Natural killer cell (primary cell): ENCODE measurements at regions of chr4 and their contacts with region 1.

Region 1: DNA sequence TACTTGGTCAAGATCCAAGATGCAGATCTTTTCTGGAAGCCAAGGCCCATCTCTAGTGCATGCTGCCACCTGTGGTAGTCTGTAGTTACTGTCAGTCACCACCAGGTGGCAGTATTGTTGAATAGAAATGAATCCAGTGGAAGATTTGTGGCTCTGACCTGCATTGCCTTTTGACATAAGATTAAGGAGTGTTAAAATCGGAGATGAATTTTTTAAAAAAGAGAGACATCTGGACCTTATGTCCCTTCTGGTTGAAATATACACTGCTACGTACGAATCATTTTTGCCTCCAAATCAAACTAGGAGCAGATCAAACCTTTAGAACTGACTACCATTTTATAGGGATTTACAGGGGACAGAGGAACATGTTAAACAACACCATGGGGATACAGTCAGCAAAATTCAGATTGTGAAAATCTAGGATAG is 46.9 kb upstream of the RHOH start:
- DNase-seq: peak; percentile 51 to 90
- ATAC-seq: peak; percentile 86 to 98 (median 92)
- H3K4me3 ChIP-seq: no peak overlapping the region
- H3K4me3 Mint-ChIP-seq: no peak overlapping the region
- H3K27ac ChIP-seq: no peak overlapping the region
- H3K27ac Mint-ChIP-seq: no peak overlapping the region
- H3K4me1 ChIP-seq: peaks cover 3% of the 10 kb centered on the region
- H3K4me1 Mint-ChIP-seq: peaks cover 0 to 7% of the 10 kb centered on the region in 2 donors
- H3K27me3 ChIP-seq: no peaks in the 10 kb centered on the region
- H3K27me3 Mint-ChIP-seq: no peaks in the 10 kb centered on the region
- CTCF ChIP-seq: peak; percentile 92

Region 2: GRCh38 chr4:40056716-40057585 is 93.0 kb before region 1 on chr4 and contains the start of gene N4BP2:
- intact Hi-C with region 1: no loop called
- DNase-seq: peak; percentile 63 to 89
- ATAC-seq: peak; percentile 65 to 81 (median 76)
- H3K4me3 ChIP-seq: peak within 1 kb of the TSS; percentile 65
- H3K4me3 Mint-ChIP-seq: peak within 1 kb of the TSS; percentile 95
- H3K27ac ChIP-seq: peak within 1 kb of the TSS; percentile 91
- H3K27ac Mint-ChIP-seq: peak within 1 kb of the TSS; percentile 91 to 95
- H3K4me1 ChIP-seq: peaks cover 18% of the 10 kb centered on the region
- H3K4me1 Mint-ChIP-seq: peaks cover 26 to 39% of the 10 kb centered on the region in 2 donors
- H3K27me3 ChIP-seq: no peaks in the 10 kb centered on the region
- H3K27me3 Mint-ChIP-seq: no peaks in the 10 kb centered on the region
- CTCF ChIP-seq: peak; percentile 74
- total RNA-seq, gene N4BP2: 16.4 to 22.4 (median 17.5) TPM

Region 3: DNA sequence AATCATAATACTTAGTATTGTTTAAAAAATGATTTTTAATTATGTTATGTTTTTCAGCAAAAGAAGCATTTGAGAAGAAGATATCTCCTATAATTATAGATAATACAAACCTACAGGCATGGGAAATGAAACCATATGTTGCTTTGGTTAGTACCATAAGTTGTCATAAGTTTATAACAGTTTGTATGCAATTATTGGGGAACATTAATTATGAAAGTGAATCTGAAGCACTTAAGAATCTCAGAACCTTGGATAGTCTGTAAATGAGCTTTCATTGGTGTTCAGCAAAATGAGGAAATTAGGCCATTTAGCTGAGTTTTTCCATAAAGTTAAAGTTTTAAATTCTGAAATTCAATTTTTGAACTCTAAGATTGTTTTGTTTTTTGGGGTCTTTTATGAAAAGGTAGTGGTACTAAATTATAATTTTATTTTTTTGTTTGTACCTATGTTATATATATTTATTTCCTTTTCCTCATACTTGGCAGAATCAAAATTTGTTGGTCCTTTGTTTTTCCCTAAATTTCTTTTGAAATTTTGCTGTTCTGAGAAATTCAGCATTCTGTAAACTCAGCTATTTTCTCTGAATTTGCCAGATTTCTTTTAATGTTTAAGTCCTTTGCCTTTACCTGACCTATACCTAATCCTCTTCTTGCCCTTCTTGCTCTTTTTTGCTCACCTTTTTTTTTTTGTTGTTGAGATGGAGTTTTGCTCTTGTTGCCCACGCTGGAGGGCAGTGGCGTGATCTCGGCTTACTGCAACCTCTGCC is 37.8 kb before region 1 on chr4:
- intact Hi-C with region 1: no loop called
- DNase-seq: no peak
- ATAC-seq: no peak
- H3K4me3 ChIP-seq: no peak overlapping the region
- H3K4me3 Mint-ChIP-seq: no peak overlapping the region
- H3K27ac ChIP-seq: no peak overlapping the region
- H3K27ac Mint-ChIP-seq: no peak overlapping the region
- H3K4me1 ChIP-seq: no peaks in the 10 kb centered on the region
- H3K4me1 Mint-ChIP-seq: peaks cover 0 to 4% of the 10 kb centered on the region in 2 donors
- H3K27me3 ChIP-seq: no peaks in the 10 kb centered on the region
- H3K27me3 Mint-ChIP-seq: no peaks in the 10 kb centered on the region
- CTCF ChIP-seq: no peak

Region 4: DNA sequence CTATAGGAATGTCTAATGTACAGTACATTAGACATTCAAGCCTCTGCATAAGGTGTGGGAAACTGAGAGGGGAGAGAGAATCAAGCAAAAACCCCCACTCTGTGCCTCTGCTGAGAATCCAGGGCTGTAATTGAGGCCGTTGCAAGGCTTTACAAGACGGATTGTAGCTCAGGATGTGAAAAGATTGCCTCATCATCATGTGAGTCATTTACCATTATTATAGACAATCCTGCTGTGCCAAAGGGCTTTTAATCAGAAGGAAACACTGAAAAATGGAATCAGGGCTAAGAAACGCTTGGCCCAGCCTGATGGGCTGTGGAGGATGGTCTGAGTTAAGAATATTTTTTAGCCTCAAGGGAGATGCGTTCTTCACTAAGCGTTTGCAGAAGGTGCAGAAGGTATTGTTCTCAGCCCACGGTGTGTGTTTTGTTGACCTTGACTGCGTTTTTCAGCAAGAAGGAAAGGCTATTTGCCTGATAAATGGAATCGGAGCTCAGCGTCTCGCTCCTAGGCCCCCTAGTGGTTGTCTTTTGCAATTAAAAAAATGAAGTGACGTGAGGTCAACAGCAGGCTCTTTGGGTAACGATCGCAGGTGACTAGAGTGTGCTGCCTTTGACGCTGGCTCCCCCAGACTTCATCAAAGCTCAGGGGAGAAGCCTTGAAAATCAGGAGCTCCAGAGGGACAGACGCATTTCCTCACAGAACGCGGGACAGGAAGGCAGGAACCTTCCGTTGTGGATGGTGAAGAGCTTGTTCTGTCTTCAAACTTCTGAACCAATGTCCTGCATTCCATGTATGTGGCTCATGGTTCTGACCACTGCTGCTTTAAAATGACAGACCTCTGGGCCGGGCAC is 167.0 kb after region 1 on chr4:
- intact Hi-C with region 1: loop called (anchors 2 kb)
- DNase-seq: peak; percentile 32 to 89
- ATAC-seq: peak; percentile 86 to 89 (median 87)
- H3K4me3 ChIP-seq: peak overlapping the region; percentile 9
- H3K4me3 Mint-ChIP-seq: peak overlapping the region; percentile 71
- H3K27ac ChIP-seq: no peak overlapping the region
- H3K27ac Mint-ChIP-seq: peak overlapping the region in 1 of 2 donors; percentile 35
- H3K4me1 ChIP-seq: peaks cover 9% of the 10 kb centered on the region
- H3K4me1 Mint-ChIP-seq: peaks cover 12 to 13% of the 10 kb centered on the region in 2 donors
- H3K27me3 ChIP-seq: no peaks in the 10 kb centered on the region
- H3K27me3 Mint-ChIP-seq: no peaks in the 10 kb centered on the region
- CTCF ChIP-seq: peak; percentile 87

Region 5: DNA sequence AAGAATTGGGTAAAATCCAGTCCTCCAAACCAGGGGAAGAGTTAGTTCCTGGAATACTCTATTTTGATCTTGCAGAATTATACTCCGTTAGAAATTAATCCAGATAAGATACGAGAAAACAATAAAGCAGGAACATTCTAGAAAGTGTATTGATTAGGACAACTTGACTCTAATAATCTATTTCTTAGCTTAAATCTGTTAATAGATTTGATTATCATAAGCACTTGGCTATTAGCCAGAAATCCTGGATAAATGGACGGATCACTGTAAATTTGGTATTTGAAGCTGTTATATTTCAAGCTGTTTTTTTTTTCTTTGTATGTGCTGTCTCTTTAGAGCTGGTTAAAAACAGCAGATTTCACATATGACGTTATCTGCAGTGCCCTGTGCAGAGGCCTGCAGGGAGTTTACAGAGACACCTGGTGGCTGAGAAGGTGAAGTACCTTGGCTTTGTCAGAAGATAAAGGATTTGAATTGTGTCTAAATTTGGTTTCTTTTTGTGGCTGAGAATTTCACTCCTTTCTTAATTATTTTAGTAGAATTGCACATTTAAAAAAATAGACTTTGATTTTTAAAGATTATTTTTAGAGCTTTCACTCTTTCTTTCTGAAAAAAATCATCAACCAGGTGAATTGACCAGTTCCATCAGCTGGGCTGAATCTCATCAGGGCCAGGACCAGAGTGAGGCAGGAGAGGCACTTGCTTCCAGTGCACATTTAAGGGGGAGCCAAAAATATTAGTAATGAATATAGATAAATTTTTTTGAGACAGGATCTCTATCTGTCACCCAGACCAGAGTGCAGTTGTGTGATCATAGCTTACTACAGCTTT is 175.4 kb after region 1 on chr4:
- intact Hi-C with region 1: loop called (anchors 1 kb)
- DNase-seq: peak in 1 of 2 donors; percentile 89
- ATAC-seq: peak; percentile 93 to 100 (median 99)
- H3K4me3 ChIP-seq: no peak overlapping the region
- H3K4me3 Mint-ChIP-seq: no peak overlapping the region
- H3K27ac ChIP-seq: no peak overlapping the region
- H3K27ac Mint-ChIP-seq: no peak overlapping the region
- H3K4me1 ChIP-seq: no peaks in the 10 kb centered on the region
- H3K4me1 Mint-ChIP-seq: no peaks in the 10 kb centered on the region
- H3K27me3 ChIP-seq: no peaks in the 10 kb centered on the region
- H3K27me3 Mint-ChIP-seq: peaks cover 8 to 14% of the 10 kb centered on the region in 2 donors
- CTCF ChIP-seq: peak; percentile 82

Region 6: DNA sequence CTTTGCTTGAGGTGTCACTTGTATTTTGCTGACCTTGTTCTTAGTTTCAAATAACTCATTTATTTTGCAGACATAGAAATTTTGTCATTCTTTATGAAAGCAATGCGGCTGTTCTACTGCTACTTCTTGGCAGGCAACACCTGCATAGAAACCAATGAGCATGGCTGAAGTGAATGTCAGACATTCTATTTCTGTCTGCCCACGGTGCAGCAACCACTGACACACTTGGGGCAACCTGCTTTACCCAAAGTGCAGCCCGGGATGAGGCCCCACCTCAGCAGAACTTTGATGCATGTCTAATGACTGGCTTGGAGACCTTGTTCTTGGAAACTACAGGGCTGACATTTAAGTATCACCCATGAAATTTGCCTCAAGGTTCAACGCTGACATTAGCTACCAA is 386.1 kb after region 1 on chr4:
- intact Hi-C with region 1: no loop called
- DNase-seq: no peak
- ATAC-seq: no peak
- H3K4me3 ChIP-seq: no peak overlapping the region
- H3K4me3 Mint-ChIP-seq: no peak overlapping the region
- H3K27ac ChIP-seq: no peak overlapping the region
- H3K27ac Mint-ChIP-seq: no peak overlapping the region
- H3K4me1 ChIP-seq: no peaks in the 10 kb centered on the region
- H3K4me1 Mint-ChIP-seq: no peaks in the 10 kb centered on the region
- H3K27me3 ChIP-seq: no peaks in the 10 kb centered on the region
- H3K27me3 Mint-ChIP-seq: no peaks in the 10 kb centered on the region
- CTCF ChIP-seq: no peak